ENCODE measurements at regions of chr3 and their contacts with region 1.

Region 1: DNA sequence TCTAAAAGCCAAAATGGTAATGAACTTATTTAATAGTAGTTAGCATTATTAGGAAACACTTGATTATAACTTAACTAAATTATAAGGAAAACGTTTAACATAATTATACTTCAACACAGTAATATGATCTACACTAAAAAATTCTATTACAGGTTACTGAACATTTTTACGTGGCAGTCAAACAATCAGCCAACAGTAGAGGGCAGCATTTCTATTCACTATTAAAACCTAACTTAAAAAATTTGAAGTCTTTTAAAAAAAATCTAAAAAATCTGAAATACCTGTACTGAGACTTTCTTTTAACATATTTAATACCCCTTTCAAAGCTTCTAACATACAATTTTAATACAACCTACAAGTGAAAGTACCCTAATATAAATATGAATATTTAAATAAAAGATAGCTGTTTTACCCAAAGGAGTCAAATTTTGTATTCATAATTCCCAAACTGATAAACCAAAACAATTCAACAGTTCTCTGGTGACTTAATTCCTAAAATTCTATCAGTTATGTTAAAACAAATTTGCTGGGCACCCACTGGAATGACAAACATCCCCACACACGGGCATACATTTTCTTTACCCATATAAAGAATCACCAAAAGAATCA is 41.5 kb downstream of the DLG1 start:
- DNase-seq: peak in 1 of 2 donors; percentile 22
- H3K4me3 ChIP-seq: no peak overlapping the region
- CTCF ChIP-seq: no peak
- POLR2A ChIP-seq: no peak

Region 2: GRCh38 chr3:197504239-197505121 is 247.5 kb after region 1 on chr3:
- intact Hi-C with region 1: loop called (anchors 5 kb)
- DNase-seq: no peak
- H3K4me3 ChIP-seq: no peak overlapping the region
- CTCF ChIP-seq: no peak
- POLR2A ChIP-seq: no peak

Measured in lower leg skin (tissue), 4 donors.